Psoas muscle (tissue), 8 donors: ENCODE measurements at regions of chr19 and their contacts with region 1.

Region 1: GRCh38 chr19:37906869-37907734 is at the start of gene SIPA1L3:
- DNase-seq: peak; percentile 95 to 96
- ATAC-seq: peak; percentile 93 to 99 (median 98)
- H3K4me3 ChIP-seq: peak within 1 kb of the TSS; percentile 79
- H3K27ac ChIP-seq: peak within 1 kb of the TSS; percentile 76
- H3K4me1 ChIP-seq: peaks cover 18% of the 10 kb centered on the region
- H3K27me3 ChIP-seq: no peaks in the 10 kb centered on the region
- CTCF ChIP-seq: peak; percentile 6
- total RNA-seq, gene SIPA1L3: 6.1 to 28.2 (median 10.3) TPM

Region 2: DNA sequence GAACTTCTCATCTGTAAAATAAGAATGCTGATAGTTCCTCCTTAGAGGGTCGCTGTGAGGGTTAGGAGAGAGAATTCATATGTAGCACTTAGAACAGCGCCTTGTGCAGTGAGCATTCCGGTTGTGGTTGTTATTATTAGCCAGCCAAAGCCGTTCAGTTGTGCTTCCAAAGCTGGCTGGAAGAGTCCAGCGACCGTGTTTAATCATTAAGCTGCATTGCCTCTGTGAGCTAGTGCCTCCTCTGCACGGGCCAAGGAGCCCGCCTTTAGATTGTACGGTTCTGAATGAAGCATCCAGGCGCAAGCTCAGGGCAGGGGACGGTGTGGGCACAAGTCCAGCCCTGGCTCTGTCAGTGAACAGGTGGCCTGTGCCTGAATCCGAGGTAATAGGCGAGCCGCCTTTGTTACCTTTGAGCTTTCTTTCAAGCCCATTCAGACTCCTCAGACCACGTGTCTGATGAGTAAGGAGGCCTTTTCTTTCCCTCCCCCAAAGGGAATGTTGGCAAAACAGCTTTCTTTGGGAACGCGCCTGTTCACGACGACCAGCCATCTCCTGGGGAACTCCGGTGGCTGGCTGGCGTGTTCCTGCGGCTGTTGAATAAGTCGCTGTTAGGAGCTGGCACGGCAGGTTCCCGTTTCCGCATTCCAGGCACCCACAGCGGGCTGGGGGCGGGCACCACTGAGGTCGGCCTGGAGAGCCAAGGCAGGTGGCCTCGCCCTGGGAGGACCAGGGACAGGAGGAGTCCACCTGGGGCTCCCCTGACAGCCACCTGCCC is 25.0 kb after region 1 on chr19:
- intact Hi-C with region 1: no loop called
- DNase-seq: peak; percentile 33 to 58
- ATAC-seq: peak; percentile 11 to 56 (median 33)
- H3K4me3 ChIP-seq: peak overlapping the region; percentile 47
- H3K27ac ChIP-seq: peak overlapping the region; percentile 60
- H3K4me1 ChIP-seq: peaks cover 36% of the 10 kb centered on the region
- H3K27me3 ChIP-seq: no peaks in the 10 kb centered on the region
- CTCF ChIP-seq: no peak

Region 3: DNA sequence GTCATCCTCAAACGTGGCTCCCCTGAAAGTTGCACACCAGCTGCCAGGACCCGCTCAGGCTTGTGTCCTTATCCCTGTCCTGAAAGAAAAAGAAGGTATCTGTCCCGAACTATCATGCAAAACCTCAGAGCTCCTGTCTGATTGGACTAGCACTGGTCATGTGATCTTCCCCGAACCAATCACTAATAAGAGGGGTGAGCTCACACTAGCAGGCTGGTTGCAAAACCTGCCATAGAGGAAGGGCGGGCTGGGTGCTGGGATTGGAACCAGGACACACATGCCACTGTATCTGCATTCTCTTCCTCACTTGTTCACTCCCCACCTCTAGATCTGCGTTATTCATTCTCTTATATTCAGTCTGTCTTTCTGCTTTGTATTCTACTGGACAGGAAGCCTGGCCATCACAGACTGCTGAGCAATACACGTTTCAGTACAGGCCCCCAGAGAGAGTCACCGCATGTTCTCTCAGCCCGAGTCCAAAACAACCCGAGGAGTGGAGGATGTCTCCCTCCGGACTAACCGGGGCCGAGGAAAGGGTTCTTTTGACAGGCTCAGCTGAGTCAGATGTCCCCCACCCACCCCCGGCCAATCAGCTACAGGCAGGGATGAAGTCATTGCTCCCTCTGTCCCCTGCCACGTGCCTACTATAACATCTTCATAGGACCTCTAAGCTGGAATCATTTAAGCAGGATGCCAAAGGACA is 97.6 kb after region 1 on chr19:
- intact Hi-C with region 1: loop called in 1 of 2 experiments (anchors 5 kb)
- DNase-seq: peak; percentile 81 to 87
- ATAC-seq: peak; percentile 94 to 98 (median 98)
- H3K4me3 ChIP-seq: peak overlapping the region; percentile 55
- H3K27ac ChIP-seq: peak overlapping the region; percentile 75
- H3K4me1 ChIP-seq: peaks cover 16% of the 10 kb centered on the region
- H3K27me3 ChIP-seq: no peaks in the 10 kb centered on the region
- CTCF ChIP-seq: no peak

Region 4: DNA sequence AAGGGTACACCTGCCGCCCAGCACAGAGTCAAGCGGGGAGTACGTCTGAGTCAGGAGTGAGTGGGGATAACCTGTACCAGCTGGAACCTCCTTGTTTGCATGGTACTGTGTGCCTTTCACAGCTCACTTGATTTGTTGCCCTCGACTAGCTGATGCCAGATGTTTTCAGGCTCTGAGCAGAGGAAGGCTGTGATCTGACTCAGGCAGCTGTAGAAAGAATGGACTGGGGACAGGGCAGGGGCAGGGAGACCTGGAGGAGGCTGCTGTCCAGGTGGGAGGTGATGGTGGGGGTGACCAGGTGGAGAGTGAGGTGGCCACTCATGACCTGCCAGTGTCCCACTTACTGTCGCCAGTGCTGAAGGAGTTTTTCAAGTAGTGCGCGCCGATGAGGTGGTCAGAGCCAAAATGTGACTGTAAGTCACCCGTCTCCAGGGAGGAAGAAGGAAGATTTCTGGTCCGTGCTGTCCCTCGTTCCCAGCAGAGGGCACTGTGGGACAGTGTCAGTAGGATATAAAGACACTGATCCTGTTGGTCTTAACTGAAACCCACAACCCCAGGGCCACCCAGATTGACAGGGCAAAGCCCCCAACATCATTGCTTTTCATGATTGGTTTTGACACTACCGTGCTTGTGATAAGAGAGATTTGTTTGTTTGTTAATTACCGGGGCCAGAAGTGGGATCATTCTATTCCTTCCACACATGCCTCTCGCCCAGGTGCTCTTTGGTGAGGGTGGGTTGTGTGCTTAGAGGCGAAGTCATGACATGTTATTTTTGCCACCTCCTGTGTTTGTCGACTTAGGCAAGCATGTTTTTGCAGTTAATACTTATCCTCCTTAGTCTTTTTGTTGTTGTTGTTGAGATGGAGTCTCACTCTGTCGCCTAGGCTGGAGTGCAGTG is 188.6 kb after region 1 on chr19:
- intact Hi-C with region 1: loop called in 1 of 2 experiments (anchors 5 kb)
- DNase-seq: peak; percentile 64 to 83
- ATAC-seq: peak; percentile 68 to 88 (median 74)
- H3K4me3 ChIP-seq: no peak overlapping the region
- H3K27ac ChIP-seq: no peak overlapping the region
- H3K4me1 ChIP-seq: peaks cover 2% of the 10 kb centered on the region
- H3K27me3 ChIP-seq: no peaks in the 10 kb centered on the region
- CTCF ChIP-seq: peak; percentile 63

Region 5: GRCh38 chr19:38229585-38230073 is 322.5 kb after region 1 on chr19:
- intact Hi-C with region 1: loop called in 1 of 2 experiments (anchors 10 kb)
- DNase-seq: peak; percentile 43 to 69
- ATAC-seq: peak; percentile 58 to 85 (median 74)
- H3K4me3 ChIP-seq: no peak overlapping the region
- H3K27ac ChIP-seq: no peak overlapping the region
- H3K4me1 ChIP-seq: peaks cover 4% of the 10 kb centered on the region
- H3K27me3 ChIP-seq: peaks cover 0 to 75% (median 17%) of the 10 kb centered on the region in 3 donors
- CTCF ChIP-seq: no peak

Region 6: DNA sequence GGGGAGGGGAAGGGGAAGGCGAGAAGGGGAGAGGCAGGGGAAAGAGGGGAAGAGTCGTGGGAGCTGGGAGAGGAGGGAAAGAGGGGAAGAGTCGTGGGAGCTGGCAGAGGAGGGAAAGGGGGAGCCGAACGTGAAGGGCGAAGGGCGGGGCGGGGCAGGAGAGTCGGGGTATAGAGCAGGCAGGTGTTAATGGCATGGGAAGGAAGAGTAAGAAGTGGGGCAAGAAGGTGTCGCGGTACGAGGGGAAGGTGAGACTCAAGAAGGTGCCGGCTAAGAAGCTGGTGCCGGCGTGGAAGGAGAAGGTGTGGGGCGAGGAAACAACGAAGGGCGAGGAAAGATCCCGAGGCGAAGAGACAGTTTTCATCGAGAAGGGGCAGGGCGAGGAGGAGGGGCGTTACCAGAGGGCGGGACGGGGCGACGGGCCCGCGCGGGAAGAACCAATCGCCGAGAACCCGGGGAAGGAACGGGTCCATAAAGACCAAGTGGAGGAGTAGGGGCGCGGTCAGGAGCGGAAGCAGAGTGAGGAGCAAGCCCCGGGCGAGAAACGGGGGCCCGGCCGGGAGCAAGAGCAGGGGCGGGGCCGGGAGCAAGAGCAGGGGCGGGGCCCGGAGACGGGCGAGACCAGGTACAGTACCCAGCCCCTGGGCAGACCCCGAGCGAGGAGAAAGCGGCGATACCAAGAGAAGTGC is 429.0 kb after region 1 on chr19:
- intact Hi-C with region 1: loop called (anchors 5 kb)
- DNase-seq: peak; percentile 95 to 97
- ATAC-seq: peak; percentile 88 to 93 (median 88)
- H3K4me3 ChIP-seq: peak overlapping the region; percentile 73
- H3K27ac ChIP-seq: peak overlapping the region; percentile 96
- H3K4me1 ChIP-seq: peaks cover 8% of the 10 kb centered on the region
- H3K27me3 ChIP-seq: no peaks in the 10 kb centered on the region
- CTCF ChIP-seq: no peak